ENCODE measurements at regions of chr11 and their contacts with region 1.

Region 1: DNA sequence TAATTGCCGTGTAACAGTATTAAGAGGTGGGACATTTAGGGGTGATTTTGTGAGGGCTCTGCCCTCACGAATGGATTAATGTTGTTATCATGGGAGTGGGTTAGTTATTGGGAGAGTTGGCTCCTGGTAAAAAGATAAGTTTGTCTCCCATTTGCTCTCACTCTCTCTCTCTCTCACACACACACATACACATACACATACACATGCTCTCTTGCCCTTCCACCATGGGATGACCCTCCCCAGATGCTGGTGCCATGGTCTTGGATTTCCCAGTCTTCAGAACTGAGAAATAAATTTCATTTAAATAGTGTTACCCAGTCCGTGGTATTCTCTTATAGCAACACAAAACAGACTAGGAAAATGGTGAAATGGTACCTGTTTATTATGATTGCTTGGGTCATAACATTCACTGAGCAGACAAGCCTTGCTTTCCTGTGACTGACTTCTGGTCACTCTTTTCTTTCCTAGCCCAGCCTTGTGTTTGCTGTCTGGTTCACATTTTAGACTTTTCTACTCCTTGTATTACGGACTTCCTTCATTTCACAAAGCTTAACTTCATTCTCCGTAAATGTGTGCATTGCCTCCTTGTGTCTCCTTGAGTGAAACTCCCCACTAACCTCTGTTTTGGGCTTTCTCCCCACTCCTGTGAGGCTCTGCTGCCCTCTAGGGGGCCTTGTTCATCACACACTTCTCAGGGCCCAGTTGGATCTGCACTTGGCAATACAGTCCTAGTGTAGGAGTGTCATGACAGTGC is 206.5 kb upstream of the CTSC start:
- DNase-seq: peak; percentile 59 to 84 (median 67)
- ATAC-seq: peak; percentile 96
- H3K4me3 ChIP-seq: no peak overlapping the region
- H3K4me3 Mint-ChIP-seq: no peak overlapping the region
- H3K27ac ChIP-seq: no peak overlapping the region
- H3K27ac Mint-ChIP-seq: no peak overlapping the region
- H3K4me1 ChIP-seq: peaks cover 5% of the 10 kb centered on the region
- H3K4me1 Mint-ChIP-seq: peaks cover 5% of the 10 kb centered on the region
- H3K27me3 ChIP-seq: no peaks in the 10 kb centered on the region
- H3K27me3 Mint-ChIP-seq: no peaks in the 10 kb centered on the region
- CTCF ChIP-seq: peak; percentile 98

Region 2: GRCh38 chr11:87352759-87353707 is 1191.0 kb before region 1 on chr11:
- CTCF ChIA-PET with region 1: interaction called, 4 read pairs
- POLR2A ChIA-PET with region 1: no interaction called
- intact Hi-C with region 1: loop called (anchors 1 to 2 kb)
- DNase-seq: peak; percentile 60 to 88 (median 78)
- ATAC-seq: peak; percentile 95
- H3K4me3 ChIP-seq: no peak overlapping the region
- H3K4me3 Mint-ChIP-seq: no peak overlapping the region
- H3K27ac ChIP-seq: no peak overlapping the region
- H3K27ac Mint-ChIP-seq: no peak overlapping the region
- H3K4me1 ChIP-seq: peaks cover 9% of the 10 kb centered on the region
- H3K4me1 Mint-ChIP-seq: peaks cover 12% of the 10 kb centered on the region
- H3K27me3 ChIP-seq: no peaks in the 10 kb centered on the region
- H3K27me3 Mint-ChIP-seq: peaks cover 13% of the 10 kb centered on the region
- CTCF ChIP-seq: peak; percentile 96

Region 3: DNA sequence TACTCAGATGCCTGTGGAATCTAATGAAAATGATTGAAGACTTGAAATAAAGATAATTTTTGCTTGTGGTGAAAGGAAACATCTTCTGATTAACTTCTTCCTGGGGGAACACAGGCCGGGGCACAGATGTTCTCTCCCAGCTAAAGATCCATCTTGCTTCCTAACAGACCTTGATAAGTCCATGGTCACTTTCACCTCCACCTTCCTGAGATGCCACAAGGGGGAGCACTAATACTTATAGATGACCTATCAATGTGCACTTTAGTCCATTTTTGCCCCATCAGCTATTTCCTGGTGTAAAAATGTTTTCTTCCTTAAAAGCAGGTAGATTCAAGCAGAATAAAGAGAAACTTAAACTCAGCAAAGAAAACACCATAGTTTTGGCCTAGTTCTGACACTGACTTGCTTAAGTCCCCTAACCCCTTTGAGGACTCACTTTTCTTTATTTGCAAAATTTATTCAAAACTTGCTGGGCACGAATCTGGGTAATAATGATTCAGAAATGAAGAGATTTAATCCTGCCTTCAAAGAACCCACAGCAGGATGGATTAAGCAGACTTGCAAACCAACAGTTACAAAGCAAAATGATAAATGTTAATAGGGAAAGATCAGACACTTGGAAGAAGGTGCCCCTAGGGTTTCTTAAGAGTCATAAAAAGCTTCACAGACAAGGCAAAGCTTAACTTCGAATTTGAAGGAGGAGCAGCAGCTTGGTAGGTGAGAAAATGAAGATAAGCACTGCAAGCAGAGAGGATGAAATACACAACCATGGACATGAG is 527.5 kb before region 1 on chr11:
- CTCF ChIA-PET with region 1: interaction called, 17 read pairs
- POLR2A ChIA-PET with region 1: no interaction called
- intact Hi-C with region 1: loop called (anchors 1 kb)
- DNase-seq: peak; percentile 3 to 74 (median 38)
- ATAC-seq: peak; percentile 48
- H3K4me3 ChIP-seq: no peak overlapping the region
- H3K4me3 Mint-ChIP-seq: no peak overlapping the region
- H3K27ac ChIP-seq: no peak overlapping the region
- H3K27ac Mint-ChIP-seq: no peak overlapping the region
- H3K4me1 ChIP-seq: no peaks in the 10 kb centered on the region
- H3K4me1 Mint-ChIP-seq: no peaks in the 10 kb centered on the region
- H3K27me3 ChIP-seq: no peaks in the 10 kb centered on the region
- H3K27me3 Mint-ChIP-seq: peaks cover 3% of the 10 kb centered on the region
- CTCF ChIP-seq: peak; percentile 69

Region 4: GRCh38 chr11:88169471-88169870 is 374.6 kb before region 1 on chr11:
- CTCF ChIA-PET with region 1: no interaction called
- POLR2A ChIA-PET with region 1: no interaction called
- intact Hi-C with region 1: loop called in 1 of 2 experiments (anchors 5 kb)
- DNase-seq: no peak
- ATAC-seq: no peak
- H3K4me3 ChIP-seq: no peak overlapping the region
- H3K4me3 Mint-ChIP-seq: no peak overlapping the region
- H3K27ac ChIP-seq: no peak overlapping the region
- H3K27ac Mint-ChIP-seq: no peak overlapping the region
- H3K4me1 ChIP-seq: peaks cover under 1% of the 10 kb centered on the region
- H3K4me1 Mint-ChIP-seq: peaks cover 4% of the 10 kb centered on the region
- H3K27me3 ChIP-seq: no peaks in the 10 kb centered on the region
- H3K27me3 Mint-ChIP-seq: peaks cover 5% of the 10 kb centered on the region
- CTCF ChIP-seq: no peak

Region 5: DNA sequence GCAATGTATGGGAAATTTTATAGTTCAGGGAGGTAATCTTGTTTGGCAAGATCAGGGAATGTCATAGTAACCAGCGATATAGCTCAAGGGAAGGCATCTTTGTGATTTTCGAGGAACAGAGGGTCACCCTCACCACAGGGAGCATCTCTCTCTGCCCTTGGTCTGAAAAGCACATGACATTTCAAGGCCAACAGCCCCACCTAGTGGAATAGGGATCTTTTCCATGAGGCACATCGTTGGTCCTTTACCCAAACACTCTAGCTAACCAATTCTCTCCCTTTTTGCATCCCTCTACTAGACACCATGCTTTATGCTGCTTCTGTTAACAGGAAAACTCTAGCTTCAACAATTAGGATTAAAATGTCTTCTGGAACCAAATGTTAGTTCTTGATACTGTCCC is 342.7 kb after region 1 on chr11:
- CTCF ChIA-PET with region 1: no interaction called
- POLR2A ChIA-PET with region 1: no interaction called
- intact Hi-C with region 1: loop called (anchors 5 to 10 kb)
- DNase-seq: peak in 11 of 14 experiments; percentile 2 to 62 (median 8)
- ATAC-seq: no peak
- H3K4me3 ChIP-seq: no peak overlapping the region
- H3K4me3 Mint-ChIP-seq: no peak overlapping the region
- H3K27ac ChIP-seq: no peak overlapping the region
- H3K27ac Mint-ChIP-seq: no peak overlapping the region
- H3K4me1 ChIP-seq: no peaks in the 10 kb centered on the region
- H3K4me1 Mint-ChIP-seq: peaks cover 5% of the 10 kb centered on the region
- H3K27me3 ChIP-seq: no peaks in the 10 kb centered on the region
- H3K27me3 Mint-ChIP-seq: no peaks in the 10 kb centered on the region
- CTCF ChIP-seq: peak; percentile 39

Region 6: DNA sequence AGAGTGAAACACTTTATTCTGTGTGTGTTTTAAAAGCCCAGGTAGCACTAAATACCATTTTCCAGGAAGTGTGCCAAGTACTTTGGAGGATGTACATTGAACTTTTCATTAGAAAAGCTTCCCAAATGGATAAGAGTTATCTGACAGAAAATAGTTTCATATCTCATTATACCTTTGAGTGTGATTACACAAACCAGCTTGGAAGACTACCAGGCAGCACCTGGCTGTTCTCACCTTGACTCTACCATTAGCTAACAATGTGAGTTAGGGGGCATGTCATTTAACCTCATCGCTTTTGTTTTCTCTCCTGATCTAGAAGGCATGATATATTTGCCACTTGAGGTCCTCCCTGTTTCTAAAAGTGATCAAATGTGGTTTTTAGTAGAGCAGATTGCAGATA is 471.5 kb after region 1 on chr11:
- CTCF ChIA-PET with region 1: no interaction called
- POLR2A ChIA-PET with region 1: no interaction called
- intact Hi-C with region 1: no loop called
- DNase-seq: no peak
- ATAC-seq: no peak
- H3K4me3 ChIP-seq: no peak overlapping the region
- H3K4me3 Mint-ChIP-seq: no peak overlapping the region
- H3K27ac ChIP-seq: no peak overlapping the region
- H3K27ac Mint-ChIP-seq: no peak overlapping the region
- H3K4me1 ChIP-seq: no peaks in the 10 kb centered on the region
- H3K4me1 Mint-ChIP-seq: no peaks in the 10 kb centered on the region
- H3K27me3 ChIP-seq: no peaks in the 10 kb centered on the region
- H3K27me3 Mint-ChIP-seq: no peaks in the 10 kb centered on the region
- CTCF ChIP-seq: no peak

Measured in CD4-positive, alpha-beta T cell (primary cell).